A549 (cell line): ENCODE measurements at regions of chr9 and their contacts with region 1.

Region 1: DNA sequence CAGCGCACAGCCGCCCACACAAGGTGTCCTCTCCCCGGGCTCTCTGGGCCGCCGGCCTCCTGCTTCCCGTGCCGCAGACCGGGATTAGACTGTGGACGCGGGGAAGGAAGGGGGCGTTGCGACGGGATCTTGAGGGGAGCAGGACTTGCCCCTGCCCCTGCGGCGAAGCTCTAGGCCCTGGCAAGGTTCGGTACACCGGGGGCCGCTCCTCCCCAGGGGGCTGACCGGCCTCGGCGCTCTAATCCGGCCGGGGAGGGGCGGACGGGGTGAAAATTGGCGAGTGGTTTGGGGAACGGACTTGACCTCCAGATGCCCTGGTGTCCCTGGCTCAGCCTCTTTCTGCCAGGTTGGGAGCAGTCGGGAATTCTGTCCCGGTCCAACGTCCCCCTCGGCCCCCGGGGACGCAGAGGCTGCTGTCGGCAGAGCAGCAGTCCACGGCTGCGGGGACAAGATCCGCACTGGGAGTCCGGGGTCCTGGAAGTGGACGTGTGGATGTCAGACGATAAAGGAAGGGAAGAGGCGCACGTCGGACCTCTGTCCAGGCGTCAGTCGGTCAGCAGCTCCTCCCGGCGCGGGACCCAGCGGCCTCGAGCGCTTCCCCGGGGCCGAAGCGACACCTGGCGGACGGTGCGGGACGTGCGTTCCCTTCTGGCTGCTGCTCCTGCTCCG is 1.9 kb upstream of the CNTFR start:
- DNase-seq: peak; percentile 84 to 91
- ATAC-seq: peak; percentile 84 to 95
- H3K4me3 ChIP-seq: no peak overlapping the region
- H3K27ac ChIP-seq: no peak overlapping the region
- H3K4me1 ChIP-seq: peaks cover 7% of the 10 kb centered on the region; the same call in 2 of the 3 replicates
- CTCF ChIP-seq: peak; percentile 81
- EP300 ChIP-seq: no peak
- POLR2A ChIP-seq: no peak
- RAD21 ChIP-seq: peak; percentile 89 to 94

Region 2: DNA sequence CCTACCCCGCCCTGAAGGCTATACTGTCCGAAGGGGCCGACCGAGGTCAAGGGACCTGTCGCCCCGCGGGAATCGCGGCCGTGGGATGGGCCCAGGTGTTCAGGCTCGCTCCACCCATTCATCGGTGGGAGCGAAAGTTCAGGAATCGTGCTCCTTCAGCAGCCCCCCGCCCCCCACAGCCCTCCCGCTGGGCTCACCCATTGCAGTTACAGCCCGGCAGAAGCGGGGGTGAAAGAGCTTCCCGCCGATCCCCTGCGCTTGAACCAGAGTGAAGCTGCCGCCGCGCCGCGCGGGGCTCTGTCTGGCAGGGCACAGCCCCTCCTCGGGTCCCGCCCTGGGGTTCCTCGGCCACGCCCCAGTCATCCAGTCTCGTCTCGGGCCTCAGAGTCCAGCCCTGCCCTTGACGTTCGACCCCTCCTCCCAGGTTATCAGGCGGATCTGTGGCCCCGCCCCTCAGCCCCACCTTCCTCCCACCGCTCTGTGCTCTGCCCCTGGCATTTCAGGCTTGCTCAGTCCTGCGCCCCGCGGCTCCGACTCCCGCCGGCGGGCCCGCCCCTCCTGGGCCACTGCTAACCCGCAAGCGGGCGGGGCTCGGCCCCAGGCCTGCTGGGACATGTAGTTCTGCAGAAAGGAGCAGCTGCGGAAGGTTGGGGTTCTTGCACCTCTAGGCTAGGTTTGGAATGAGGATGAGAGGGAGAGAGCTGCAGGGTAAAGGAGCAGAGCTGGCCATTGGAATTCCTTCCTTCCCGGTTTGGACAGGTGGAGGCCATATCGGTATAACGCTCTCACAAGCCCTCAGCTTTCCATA is 214.6 kb before region 1 on chr9 and contains the start of gene MYORG:
- CTCF ChIA-PET with region 1: interaction called, 12 read pairs
- POLR2A ChIA-PET with region 1: no interaction called
- DNase-seq: peak; percentile 96 to 98
- ATAC-seq: peak; percentile 78 to 89
- H3K4me3 ChIP-seq: peak within 1 kb of the TSS; percentile 79
- H3K27ac ChIP-seq: peak within 1 kb of the TSS; percentile 63 to 85
- H3K4me1 ChIP-seq: peaks cover 30% of the 10 kb centered on the region
- CTCF ChIP-seq: no peak
- EP300 ChIP-seq: no peak
- POLR2A ChIP-seq: peak; percentile 50
- RAD21 ChIP-seq: no peak
- polyA plus RNA-seq, gene MYORG: 2.2 and 3.7 TPM in 2 replicates

Region 3: DNA sequence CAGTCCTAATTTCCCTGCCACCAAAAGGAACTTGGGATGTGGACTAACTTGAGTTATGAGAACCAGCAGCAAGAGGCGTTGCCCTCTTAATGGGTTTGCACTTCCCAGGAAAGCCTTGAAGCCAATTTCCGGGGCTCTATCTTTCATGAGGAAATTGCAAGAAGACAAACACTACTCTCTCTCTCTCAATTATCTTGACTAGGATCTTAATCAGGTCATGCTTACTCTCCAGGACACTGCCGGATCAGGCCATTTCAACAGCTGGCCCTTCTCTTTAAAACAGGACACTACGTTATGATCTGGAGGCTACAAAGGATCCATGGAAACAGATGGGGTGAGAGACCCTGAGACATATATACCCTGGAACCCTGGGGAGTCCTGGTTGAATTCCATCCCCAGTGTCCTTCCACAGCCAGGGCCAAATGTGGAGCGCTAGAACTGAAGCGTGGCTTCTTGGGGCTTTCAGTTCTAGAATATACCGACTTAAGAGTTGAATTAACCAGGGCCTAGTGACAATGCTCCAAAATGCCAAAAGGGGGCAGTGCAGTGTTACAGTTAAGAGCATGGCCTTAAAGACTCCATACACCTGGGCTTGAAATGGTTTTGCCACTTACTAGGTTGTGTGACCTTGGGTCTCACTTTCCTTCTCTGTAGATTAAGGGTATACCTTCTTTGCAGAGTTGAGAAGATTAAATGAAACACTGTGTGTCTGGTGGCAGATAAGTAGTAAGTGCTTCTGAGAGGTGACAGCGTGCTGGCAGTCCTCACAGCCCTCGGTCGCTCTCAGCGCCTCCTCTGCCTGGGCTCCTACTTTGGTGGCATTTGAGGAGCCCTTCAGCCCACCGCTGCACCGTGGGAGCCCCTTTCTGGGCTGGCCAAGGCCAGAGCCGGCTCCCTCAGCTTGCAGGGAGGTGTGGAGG is 154.1 kb before region 1 on chr9:
- CTCF ChIA-PET with region 1: interaction called, 152 read pairs
- POLR2A ChIA-PET with region 1: no interaction called
- DNase-seq: peak; percentile 51 to 87
- ATAC-seq: peak; percentile 95 to 98
- H3K4me3 ChIP-seq: no peak overlapping the region
- H3K27ac ChIP-seq: no peak overlapping the region
- H3K4me1 ChIP-seq: no peaks in the 10 kb centered on the region
- CTCF ChIP-seq: peak; percentile 87
- EP300 ChIP-seq: no peak
- POLR2A ChIP-seq: no peak
- RAD21 ChIP-seq: peak; percentile 86 to 92

Region 4: GRCh38 chr9:34493972-34494535 is 97.3 kb before region 1 on chr9:
- CTCF ChIA-PET with region 1: interaction called, 32 read pairs
- POLR2A ChIA-PET with region 1: no interaction called
- DNase-seq: peak; percentile 19 to 20
- ATAC-seq: no peak
- H3K4me3 ChIP-seq: no peak overlapping the region
- H3K27ac ChIP-seq: no peak overlapping the region
- H3K4me1 ChIP-seq: no peaks in the 10 kb centered on the region
- CTCF ChIP-seq: no peak
- EP300 ChIP-seq: no peak
- POLR2A ChIP-seq: no peak
- RAD21 ChIP-seq: no peak

Region 5: DNA sequence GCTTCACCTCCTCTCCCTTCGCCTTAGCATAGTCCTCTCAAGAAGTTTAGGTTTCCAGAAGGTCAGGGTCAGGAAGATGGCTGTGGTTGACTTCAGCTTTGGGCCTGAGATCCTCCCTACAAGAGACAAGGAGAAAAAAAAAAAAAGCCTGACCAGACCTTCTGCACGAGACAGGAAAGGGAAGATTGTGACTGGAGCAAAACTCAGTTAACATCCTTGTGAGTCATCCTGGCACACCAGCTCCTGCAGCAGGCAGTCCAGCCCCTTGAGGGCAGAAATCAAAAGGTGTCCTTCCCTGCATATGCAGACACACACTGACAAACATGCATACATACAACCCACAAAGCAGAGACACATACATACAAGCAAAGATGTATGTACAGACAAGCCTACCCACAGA is 50.6 kb before region 1 on chr9:
- CTCF ChIA-PET with region 1: interaction called, 297 read pairs
- POLR2A ChIA-PET with region 1: no interaction called
- DNase-seq: peak in 1 of 2 experiments; percentile 45
- ATAC-seq: peak; percentile 80 to 83
- H3K4me3 ChIP-seq: no peak overlapping the region
- H3K27ac ChIP-seq: no peak overlapping the region
- H3K4me1 ChIP-seq: peaks cover 12% of the 10 kb centered on the region; the same call in 1 of the 3 replicates
- CTCF ChIP-seq: no peak
- EP300 ChIP-seq: no peak
- POLR2A ChIP-seq: no peak
- RAD21 ChIP-seq: no peak

Region 6: GRCh38 chr9:34578241-34579103 is 12.9 kb before region 1 on chr9:
- CTCF ChIA-PET with region 1: interaction called, 125 read pairs
- POLR2A ChIA-PET with region 1: no interaction called
- DNase-seq: no peak
- ATAC-seq: no peak; a peak in 1 of 6 replicates
- H3K4me3 ChIP-seq: no peak overlapping the region
- H3K27ac ChIP-seq: no peak overlapping the region
- H3K4me1 ChIP-seq: no peaks in the 10 kb centered on the region
- CTCF ChIP-seq: no peak
- EP300 ChIP-seq: no peak
- POLR2A ChIP-seq: no peak
- RAD21 ChIP-seq: no peak

Region 7: GRCh38 chr9:34637356-34638137 is 46.2 kb after region 1 on chr9 and contains the start of gene SIGMAR1:
- CTCF ChIA-PET with region 1: interaction called, 20 read pairs
- POLR2A ChIA-PET with region 1: no interaction called
- DNase-seq: peak; percentile 87 to 93
- ATAC-seq: peak; percentile 87 to 92
- H3K4me3 ChIP-seq: peak within 1 kb of the TSS; percentile 73
- H3K27ac ChIP-seq: peak within 1 kb of the TSS; percentile 88 to 95
- H3K4me1 ChIP-seq: peaks cover 26% of the 10 kb centered on the region; the same call in 2 of the 3 replicates
- CTCF ChIP-seq: no peak
- EP300 ChIP-seq: no peak
- POLR2A ChIP-seq: peak; percentile 89
- RAD21 ChIP-seq: no peak
- polyA plus RNA-seq, gene SIGMAR1: 64.6 and 95.4 TPM in 2 replicates